Ascending aorta (tissue), 2 donors: ENCODE measurements at regions of chr3 and their contacts with region 1.

Region 1: DNA sequence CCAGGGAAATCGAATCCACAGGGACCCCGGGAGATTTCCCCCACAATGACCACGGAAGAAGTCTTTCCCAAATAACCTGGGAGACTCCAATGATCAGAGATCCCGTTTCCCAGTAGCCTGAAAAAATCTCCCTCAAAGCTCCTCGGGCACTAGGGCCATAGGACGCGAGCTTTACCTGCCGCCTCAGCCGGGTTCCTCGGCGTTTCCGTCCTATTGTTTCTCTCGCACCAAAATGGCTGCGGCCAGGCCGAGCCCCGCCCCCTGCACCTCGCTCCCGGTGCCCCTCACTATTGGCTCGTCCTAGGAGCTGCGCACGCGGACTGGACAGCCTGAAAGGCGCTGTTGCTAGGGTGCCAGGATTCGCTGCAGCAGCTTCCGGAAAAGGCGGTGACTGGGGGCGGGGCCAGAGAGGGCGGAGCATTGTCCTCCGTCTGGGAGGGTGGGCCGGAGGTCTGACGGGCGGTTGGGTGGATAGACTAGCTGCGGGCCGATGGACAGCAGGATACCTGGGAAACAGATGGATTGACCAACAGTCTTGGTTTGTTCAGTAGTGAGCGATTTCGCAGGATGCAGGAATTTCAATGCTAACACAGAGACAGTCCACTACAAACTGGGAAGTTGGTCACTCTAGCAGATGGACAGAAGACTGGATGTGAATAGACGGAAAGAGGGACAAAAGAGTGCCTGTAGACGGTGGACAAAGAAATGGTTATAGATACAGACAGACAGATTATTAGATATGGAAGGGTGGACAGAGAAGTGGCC is at the start of gene IP6K2:
- DNase-seq: peak; percentile 94 to 99
- H3K4me3 ChIP-seq: peak within 1 kb of the TSS; percentile 68 to 87
- H3K27ac ChIP-seq: peak within 1 kb of the TSS; percentile 71 to 79
- H3K4me1 ChIP-seq: peaks cover 4 to 19% of the 10 kb centered on the region in 2 donors
- H3K27me3 ChIP-seq: no peaks in the 10 kb centered on the region
- CTCF ChIP-seq: no peak
- total RNA-seq, gene IP6K2: 101 TPM

Region 2: GRCh38 chr3:48685602-48686511 is 31.3 kb before region 1 on chr3 and contains the start of gene NCKIPSD:
- intact Hi-C with region 1: loop called (anchors 1 kb)
- DNase-seq: peak; percentile 50 to 93
- H3K4me3 ChIP-seq: peak within 1 kb of the TSS; percentile 81 to 94
- H3K27ac ChIP-seq: peak within 1 kb of the TSS; percentile 86 to 90
- H3K4me1 ChIP-seq: peaks cover 10 to 23% of the 10 kb centered on the region in 2 donors
- H3K27me3 ChIP-seq: no peaks in the 10 kb centered on the region
- CTCF ChIP-seq: peak; percentile 63 to 96 (median 75)
- total RNA-seq, gene NCKIPSD: 102 TPM

Region 3: GRCh38 chr3:48694610-48695392 is 22.4 kb before region 1 on chr3:
- intact Hi-C with region 1: loop called (anchors 1 kb)
- DNase-seq: peak in 1 of 2 donors; percentile 91
- H3K4me3 ChIP-seq: peak overlapping the region; percentile 41 to 61
- H3K27ac ChIP-seq: peak overlapping the region; percentile 93 to 96
- H3K4me1 ChIP-seq: peaks cover 9 to 23% of the 10 kb centered on the region in 2 donors
- H3K27me3 ChIP-seq: no peaks in the 10 kb centered on the region
- CTCF ChIP-seq: no peak

Region 4: GRCh38 chr3:48739955-48740823 is 23.0 kb after region 1 on chr3:
- intact Hi-C with region 1: loop called (anchors 2 kb)
- DNase-seq: peak; percentile 47 to 92
- H3K4me3 ChIP-seq: peak overlapping the region in 1 of 2 donors; percentile 27
- H3K27ac ChIP-seq: peak overlapping the region; percentile 73 to 77
- H3K4me1 ChIP-seq: peaks cover 7 to 10% of the 10 kb centered on the region in 2 donors
- H3K27me3 ChIP-seq: no peaks in the 10 kb centered on the region
- CTCF ChIP-seq: peak; percentile 84 to 90 (median 89)

Region 5: GRCh38 chr3:48918388-48919214 is 201.4 kb after region 1 on chr3 and contains the start of gene ARIH2:
- intact Hi-C with region 1: loop called (anchors 5 kb)
- DNase-seq: peak; percentile 62 to 96
- H3K4me3 ChIP-seq: peak within 1 kb of the TSS; percentile 72 to 88
- H3K27ac ChIP-seq: peak within 1 kb of the TSS; percentile 95 to 98
- H3K4me1 ChIP-seq: peaks cover 0 to 9% of the 10 kb centered on the region in 2 donors
- H3K27me3 ChIP-seq: no peaks in the 10 kb centered on the region
- CTCF ChIP-seq: no peak
- total RNA-seq, gene ARIH2: 82.3 TPM

Region 6: DNA sequence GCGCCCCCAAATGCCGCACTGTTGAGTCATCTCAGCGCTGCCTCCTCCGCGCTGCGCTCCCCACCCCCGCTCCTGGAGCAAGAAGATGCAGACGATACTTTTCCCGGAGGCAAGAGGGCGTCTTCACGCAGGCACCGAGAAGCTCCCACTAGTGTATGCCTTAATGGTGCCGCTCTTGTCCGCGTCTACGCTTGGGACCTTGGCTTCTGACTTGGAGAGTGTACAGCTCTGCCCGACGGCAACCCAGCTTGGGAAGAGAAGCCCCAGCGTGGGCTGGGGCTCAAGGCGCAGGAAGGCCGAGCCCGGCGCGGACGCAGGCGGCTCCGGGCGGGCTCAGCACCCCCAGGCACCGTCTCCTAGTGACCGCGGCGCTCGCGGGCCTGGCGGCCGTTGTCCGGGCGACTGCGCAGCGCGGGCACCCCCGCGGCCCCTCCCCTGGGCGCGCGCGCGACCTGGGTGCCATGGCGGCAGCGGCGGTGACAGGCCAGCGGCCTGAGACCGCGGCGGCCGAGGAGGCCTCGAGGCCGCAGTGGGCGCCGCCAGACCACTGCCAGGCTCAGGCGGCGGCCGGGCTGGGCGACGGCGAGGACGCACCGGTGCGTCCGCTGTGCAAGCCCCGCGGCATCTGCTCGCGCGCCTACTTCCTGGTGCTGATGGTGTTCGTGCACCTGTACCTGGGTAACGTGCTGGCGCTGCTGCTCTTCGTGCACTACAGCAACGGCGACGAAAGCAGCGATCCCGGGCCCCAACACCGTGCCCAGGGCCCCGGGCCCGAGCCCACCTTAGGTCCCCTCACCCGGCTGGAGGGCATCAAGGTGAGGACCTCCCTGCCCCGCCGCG is 272.9 kb after region 1 on chr3 and contains the start of gene P4HTM:
- intact Hi-C with region 1: no loop called
- DNase-seq: peak; percentile 46 to 96
- H3K4me3 ChIP-seq: peak within 1 kb of the TSS; percentile 80 to 99
- H3K27ac ChIP-seq: peak within 1 kb of the TSS; percentile 92 to 97
- H3K4me1 ChIP-seq: peaks cover 10 to 26% of the 10 kb centered on the region in 2 donors
- H3K27me3 ChIP-seq: no peaks in the 10 kb centered on the region
- CTCF ChIP-seq: peak in 2 of 3 experiments; percentile 35 to 45
- total RNA-seq, gene P4HTM: 71.9 TPM

Region 7: DNA sequence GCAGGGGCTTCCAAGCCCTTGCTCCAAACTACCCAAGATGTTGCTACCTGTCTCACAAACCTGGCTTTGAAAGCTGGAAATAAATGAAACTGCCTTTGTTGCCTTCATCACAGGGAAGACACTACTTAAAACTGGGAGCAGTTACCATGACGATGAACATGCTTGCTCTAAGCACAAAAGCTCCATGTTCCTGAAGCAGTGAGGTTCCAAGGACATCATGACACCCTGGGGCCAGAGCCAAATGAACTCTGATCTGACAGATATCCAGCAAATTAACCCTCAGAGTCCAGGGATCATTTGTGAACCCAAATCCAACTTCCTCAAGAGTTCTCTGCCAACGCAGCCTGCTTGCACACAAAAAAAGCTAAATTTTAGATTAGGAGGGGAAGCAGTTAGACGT is 1128.5 kb after region 1 on chr3:
- intact Hi-C with region 1: no loop called
- DNase-seq: no peak
- H3K4me3 ChIP-seq: no peak overlapping the region
- H3K27ac ChIP-seq: no peak overlapping the region
- H3K4me1 ChIP-seq: no peaks in the 10 kb centered on the region
- H3K27me3 ChIP-seq: no peaks in the 10 kb centered on the region
- CTCF ChIP-seq: no peak